Activated CD4-positive, alpha-beta T cell treated with anti-CD3 and anti-CD28 coated beads for 36 hours (primary cell): ENCODE measurements at regions of chr7 and their contacts with region 1.

Region 1: DNA sequence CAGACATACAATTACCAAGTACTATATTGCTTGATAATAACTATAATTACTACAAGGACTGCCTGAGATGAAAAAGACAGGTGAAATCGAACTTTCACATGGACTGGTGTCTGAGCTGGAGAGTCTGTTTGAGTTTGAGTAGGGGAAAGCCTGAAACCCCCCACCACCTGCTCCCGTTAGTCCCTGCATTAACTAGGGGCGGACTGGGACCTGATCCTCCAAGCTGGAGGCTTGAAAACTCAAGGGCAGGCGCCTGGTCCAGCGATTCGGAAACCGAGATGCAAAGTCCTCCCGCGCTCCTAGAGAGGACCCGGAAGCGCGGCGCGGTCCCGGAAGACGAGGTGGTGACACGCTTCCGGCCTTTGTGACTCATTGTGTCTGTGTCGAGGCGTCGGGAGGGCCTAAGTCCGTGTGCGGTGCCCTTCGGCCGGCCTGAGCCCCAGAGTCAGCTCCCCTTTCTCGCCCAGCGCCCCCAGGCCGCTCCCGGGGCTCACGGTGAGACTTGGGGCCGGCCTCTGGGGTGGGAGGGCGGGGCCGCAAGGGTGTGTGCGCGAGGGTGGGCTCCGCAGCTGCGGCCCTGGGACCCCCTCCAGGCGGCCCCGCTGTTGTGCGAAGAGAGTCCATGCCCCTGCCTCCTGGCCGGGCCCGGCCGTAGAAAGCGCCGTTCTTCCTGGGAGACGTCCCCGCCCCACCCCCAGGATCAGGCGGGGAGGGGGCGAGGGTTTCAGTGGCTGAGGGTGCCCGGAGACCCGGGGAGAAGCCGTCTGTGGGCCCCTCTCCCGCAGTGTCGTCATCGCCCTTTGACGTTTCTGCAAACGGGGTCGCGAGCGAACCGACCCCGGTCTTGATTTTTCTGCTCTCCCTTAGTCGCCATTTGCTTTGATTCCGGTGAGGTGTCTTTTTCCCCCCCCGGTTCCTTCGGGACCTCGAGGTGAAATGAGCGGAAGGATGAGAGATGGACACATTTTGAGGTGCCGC is at the start of gene ZKSCAN1:
- DNase-seq: peak; percentile 92
- ATAC-seq: peak; percentile 87
- H3K4me3 Mint-ChIP-seq: peak within 1 kb of the TSS; percentile 94
- H3K27ac Mint-ChIP-seq: peak within 1 kb of the TSS; percentile 96
- H3K4me1 Mint-ChIP-seq: peaks cover 53% of the 10 kb centered on the region
- H3K27me3 Mint-ChIP-seq: no peaks in the 10 kb centered on the region
- total RNA-seq, gene ZKSCAN1: 45.2 to 62.9 TPM

Region 2: GRCh38 chr7:99551767-99552463 is 463.6 kb before region 1 on chr7 and contains the start of gene FAM200A:
- CTCF ChIA-PET with region 1: no interaction called
- POLR2A ChIA-PET with region 1: no interaction called
- intact Hi-C with region 1: loop called in 1 of 2 experiments (anchors 2 kb)
- DNase-seq: peak; percentile 92
- ATAC-seq: peak; percentile 99
- H3K4me3 Mint-ChIP-seq: peak within 1 kb of the TSS; percentile 75
- H3K27ac Mint-ChIP-seq: peak within 1 kb of the TSS; percentile 62
- H3K4me1 Mint-ChIP-seq: peaks cover 30% of the 10 kb centered on the region
- H3K27me3 Mint-ChIP-seq: no peaks in the 10 kb centered on the region
- total RNA-seq, gene FAM200A: 4.9 to 5.5 TPM

Region 3: DNA sequence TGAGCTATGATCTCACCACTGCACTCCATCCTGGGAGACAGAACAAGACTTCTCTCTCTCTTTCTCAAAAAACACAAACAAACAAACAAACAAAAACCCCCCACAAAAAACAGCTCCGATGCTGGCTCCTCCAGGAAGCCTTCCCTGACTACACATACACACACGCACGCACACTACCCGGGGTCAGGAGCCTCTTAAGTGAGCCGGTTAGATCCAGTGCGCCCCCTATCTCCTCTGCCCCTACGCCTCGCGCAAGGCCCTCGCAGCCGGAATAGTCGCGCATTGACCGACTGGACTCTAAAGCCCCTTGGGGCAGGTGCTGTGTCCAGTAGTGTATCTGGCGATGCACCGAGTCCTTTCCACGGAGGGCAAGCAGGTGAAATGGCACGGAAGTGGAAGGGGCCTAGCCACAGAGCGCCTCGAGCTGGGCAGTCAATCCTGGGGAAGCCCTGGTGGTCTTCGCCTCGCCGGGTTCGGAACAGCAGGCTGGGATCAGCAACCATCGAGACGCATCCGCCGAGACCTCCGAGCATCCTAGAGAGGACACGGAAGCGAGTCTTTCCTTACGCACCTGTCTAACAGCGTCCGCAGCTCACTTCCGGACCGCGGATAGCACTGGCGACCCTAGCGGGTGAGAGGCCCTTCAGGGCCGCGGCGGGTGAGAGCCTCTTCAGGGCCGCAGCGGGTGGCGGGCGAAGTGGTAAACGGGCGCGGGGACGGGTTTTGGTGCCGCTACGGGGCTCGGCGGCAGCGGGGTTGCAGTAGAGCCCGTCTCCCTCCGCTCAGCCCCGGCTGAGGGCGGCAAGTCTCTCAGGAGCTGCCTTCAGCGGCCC is 398.9 kb before region 1 on chr7 and contains the start of gene ZSCAN25:
- CTCF ChIA-PET with region 1: no interaction called
- POLR2A ChIA-PET with region 1: no interaction called
- intact Hi-C with region 1: loop called in 1 of 2 experiments (anchors 2 kb)
- DNase-seq: peak; percentile 92
- ATAC-seq: peak; percentile 93
- H3K4me3 Mint-ChIP-seq: peak within 1 kb of the TSS; percentile 92
- H3K27ac Mint-ChIP-seq: peak within 1 kb of the TSS; percentile 96
- H3K4me1 Mint-ChIP-seq: peaks cover 44% of the 10 kb centered on the region
- H3K27me3 Mint-ChIP-seq: no peaks in the 10 kb centered on the region
- total RNA-seq, gene ZSCAN25: 20.5 to 25.2 TPM

Region 4: DNA sequence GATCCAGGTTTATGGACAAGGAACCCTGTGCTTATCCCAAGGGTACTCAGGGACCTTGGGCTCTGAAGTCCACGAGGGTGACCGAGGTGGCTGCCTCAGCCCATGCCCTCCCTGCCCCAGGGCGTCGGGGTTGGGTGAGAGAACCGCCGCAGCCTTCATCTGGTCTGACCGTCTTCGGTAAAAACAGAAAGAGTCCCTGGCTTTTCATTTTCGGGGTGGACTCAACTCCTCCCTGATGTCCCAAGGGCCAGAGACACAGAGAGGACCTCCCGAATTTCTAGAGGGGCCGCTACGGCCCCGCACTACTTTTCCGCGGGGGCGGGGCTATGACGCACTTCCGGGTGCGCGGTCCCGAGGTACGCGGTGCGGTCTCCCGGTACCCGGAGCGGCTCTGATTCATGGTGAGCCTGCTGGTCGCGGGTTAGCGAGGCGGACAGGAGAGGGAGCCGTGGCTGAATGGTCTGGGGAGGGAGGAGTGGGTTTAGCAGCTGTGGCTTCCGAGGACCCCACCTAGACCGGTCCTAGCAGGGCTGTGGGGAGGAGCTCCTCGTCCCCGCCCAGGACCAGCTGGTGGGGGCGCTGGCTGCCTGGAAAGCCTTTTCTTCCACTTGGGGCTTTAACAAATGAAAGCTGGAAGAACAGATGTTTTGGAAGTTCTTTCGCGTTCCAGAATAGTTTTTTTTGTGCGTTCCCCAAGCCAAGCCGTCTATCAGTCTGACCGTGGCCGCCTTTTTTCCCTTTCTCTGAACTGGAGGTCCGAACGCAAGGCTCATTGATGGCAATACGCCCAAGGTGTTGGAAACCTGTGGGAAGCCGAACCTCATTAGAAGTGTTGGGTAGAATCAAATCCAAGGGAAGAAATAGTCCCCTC is 34.2 kb after region 1 on chr7 and contains the start of gene ZSCAN21:
- CTCF ChIA-PET with region 1: interaction called, 5 read pairs
- POLR2A ChIA-PET with region 1: interaction called, 3 read pairs
- intact Hi-C with region 1: loop called (anchors 1 to 5 kb)
- DNase-seq: peak; percentile 89
- ATAC-seq: peak; percentile 90
- H3K4me3 Mint-ChIP-seq: peak within 1 kb of the TSS; percentile 85
- H3K27ac Mint-ChIP-seq: peak within 1 kb of the TSS; percentile 86
- H3K4me1 Mint-ChIP-seq: peaks cover 17% of the 10 kb centered on the region
- H3K27me3 Mint-ChIP-seq: no peaks in the 10 kb centered on the region
- total RNA-seq, gene ZSCAN21: 6.4 to 7.4 TPM

Region 5: DNA sequence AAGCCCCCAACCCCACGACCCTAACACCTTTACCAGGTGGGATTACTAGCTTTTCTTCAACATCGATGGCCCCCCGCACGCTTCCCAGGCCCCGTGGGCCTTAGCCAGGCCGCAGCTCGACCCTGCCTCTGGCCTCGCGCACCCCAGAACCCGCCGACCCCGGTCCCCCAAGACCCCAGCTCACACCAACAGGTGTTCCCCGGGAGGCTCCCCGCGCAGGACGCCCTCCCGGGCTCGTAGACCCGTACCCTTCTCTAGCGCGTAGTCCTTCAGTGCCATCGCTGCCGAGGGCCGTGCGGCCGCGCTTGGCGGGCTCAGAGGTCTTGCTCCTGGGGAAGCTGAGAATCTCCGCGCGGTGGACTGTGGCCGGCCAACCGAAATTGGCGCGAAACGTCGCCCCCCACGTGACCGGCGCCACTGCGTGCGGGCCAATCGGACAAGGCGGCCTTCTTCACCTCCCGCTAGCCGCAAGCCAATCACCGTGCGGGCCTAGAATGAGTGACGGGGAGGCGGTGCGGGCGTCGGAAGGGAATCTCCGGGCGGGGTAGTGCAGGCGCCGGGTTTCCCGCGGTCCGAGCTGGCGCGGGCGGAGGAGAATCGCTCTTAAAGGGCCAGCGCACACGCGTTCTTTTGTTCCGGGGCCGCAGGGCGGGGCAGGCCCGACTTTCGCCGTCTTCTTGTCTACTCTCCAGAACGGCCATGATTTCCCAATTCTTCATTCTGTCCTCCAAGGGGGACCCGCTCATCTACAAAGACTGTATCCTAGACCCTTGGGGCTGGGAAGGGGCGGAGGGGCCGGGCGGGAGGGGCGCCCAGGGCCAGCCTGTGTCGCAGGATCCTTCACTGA is 85.7 kb after region 1 on chr7 and contains the starts of genes AP4M1 and MCM7:
- CTCF ChIA-PET with region 1: no interaction called
- POLR2A ChIA-PET with region 1: no interaction called
- intact Hi-C with region 1: loop called in 1 of 2 experiments (anchors 1 kb)
- DNase-seq: peak; percentile 99
- ATAC-seq: peak; percentile 91
- H3K4me3 Mint-ChIP-seq: peak within 1 kb of the TSS; percentile 90
- H3K27ac Mint-ChIP-seq: peak within 1 kb of the TSS; percentile 94
- H3K4me1 Mint-ChIP-seq: peaks cover 41% of the 10 kb centered on the region
- H3K27me3 Mint-ChIP-seq: no peaks in the 10 kb centered on the region
- total RNA-seq, gene AP4M1: 8.8 to 10.4 TPM
- total RNA-seq, gene MCM7: 411 to 429 TPM

Region 6: GRCh38 chr7:100221231-100221718 is 205.8 kb after region 1 on chr7:
- CTCF ChIA-PET with region 1: no interaction called
- POLR2A ChIA-PET with region 1: no interaction called
- intact Hi-C with region 1: loop called in 1 of 2 experiments (anchors 5 kb)
- DNase-seq: peak; percentile 81
- ATAC-seq: peak; percentile 57
- H3K4me3 Mint-ChIP-seq: peak overlapping the region; percentile 96
- H3K27ac Mint-ChIP-seq: peak overlapping the region; percentile 90
- H3K4me1 Mint-ChIP-seq: peaks cover 47% of the 10 kb centered on the region
- H3K27me3 Mint-ChIP-seq: no peaks in the 10 kb centered on the region

Region 7: GRCh38 chr7:100469227-100470044 is 453.9 kb after region 1 on chr7:
- CTCF ChIA-PET with region 1: no interaction called
- POLR2A ChIA-PET with region 1: no interaction called
- intact Hi-C with region 1: no loop called
- DNase-seq: peak; percentile 91
- ATAC-seq: peak; percentile 92
- H3K4me3 Mint-ChIP-seq: no peak overlapping the region
- H3K27ac Mint-ChIP-seq: no peak overlapping the region
- H3K4me1 Mint-ChIP-seq: peaks cover 31% of the 10 kb centered on the region
- H3K27me3 Mint-ChIP-seq: no peaks in the 10 kb centered on the region